Spleen (tissue), 13 donors: ENCODE measurements at regions of chr6 and their contacts with region 1.

Region 1: DNA sequence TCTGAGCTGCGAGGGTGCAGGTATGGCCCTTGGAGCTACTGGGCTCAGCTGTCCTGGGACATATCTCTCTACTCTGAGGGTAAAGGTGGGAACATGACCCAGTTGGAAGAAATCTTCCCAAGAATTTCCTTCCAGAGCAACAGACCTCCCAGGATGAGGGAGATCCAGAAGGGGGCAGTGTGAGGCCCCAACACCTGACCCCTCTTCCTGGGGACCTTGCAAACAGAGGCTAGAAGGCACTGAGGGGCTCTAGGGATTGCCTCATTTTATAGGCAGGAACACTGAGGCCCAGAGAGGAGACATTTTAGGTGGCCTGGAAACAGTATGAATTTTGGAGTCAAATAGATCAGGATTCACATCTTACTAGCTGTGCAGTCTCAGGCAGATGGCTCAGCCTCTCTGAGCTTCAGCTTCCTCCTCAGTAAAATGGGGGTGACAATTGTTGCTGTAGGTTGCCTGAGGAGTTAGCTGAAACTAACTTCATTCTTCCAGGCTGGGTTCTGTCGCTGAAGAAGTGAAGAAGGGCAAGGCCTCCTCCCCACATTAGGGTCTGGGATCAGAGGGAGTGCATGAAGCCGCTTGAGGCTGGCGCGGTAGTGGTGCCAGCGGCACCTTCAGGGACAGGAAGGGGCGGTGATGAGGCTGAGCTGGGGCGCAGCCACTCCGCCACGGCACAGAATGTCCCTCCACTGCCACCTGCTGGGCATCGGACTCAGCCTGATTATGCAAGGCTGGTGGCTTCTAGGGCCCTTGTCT is 11.4 kb downstream of the KCNK17 start:
- DNase-seq: peak; percentile 96
- H3K4me3 ChIP-seq: peak overlapping the region in 1 of 8 donors; percentile 45
- H3K27ac ChIP-seq: no peak overlapping the region
- H3K4me1 ChIP-seq: peaks cover 0 to 8% (median 2%) of the 10 kb centered on the region in 6 donors
- H3K27me3 ChIP-seq: peaks cover 0 to 11% (median 0%) of the 10 kb centered on the region in 7 donors
- CTCF ChIP-seq: peak; percentile 79 to 95 (median 87)
- POLR2A ChIP-seq: no peak

Region 2: GRCh38 chr6:38871741-38872568 is 430.9 kb before region 1 on chr6:
- intact Hi-C with region 1: loop called (anchors 5 kb)
- DNase-seq: no peak
- H3K4me3 ChIP-seq: no peak overlapping the region
- H3K27ac ChIP-seq: no peak overlapping the region
- H3K4me1 ChIP-seq: peaks cover 0 to 18% (median 5%) of the 10 kb centered on the region in 6 donors
- H3K27me3 ChIP-seq: peaks cover 0 to 3% (median 0%) of the 10 kb centered on the region in 7 donors
- CTCF ChIP-seq: peak; percentile 57 to 90 (median 78)
- POLR2A ChIP-seq: no peak

Region 3: DNA sequence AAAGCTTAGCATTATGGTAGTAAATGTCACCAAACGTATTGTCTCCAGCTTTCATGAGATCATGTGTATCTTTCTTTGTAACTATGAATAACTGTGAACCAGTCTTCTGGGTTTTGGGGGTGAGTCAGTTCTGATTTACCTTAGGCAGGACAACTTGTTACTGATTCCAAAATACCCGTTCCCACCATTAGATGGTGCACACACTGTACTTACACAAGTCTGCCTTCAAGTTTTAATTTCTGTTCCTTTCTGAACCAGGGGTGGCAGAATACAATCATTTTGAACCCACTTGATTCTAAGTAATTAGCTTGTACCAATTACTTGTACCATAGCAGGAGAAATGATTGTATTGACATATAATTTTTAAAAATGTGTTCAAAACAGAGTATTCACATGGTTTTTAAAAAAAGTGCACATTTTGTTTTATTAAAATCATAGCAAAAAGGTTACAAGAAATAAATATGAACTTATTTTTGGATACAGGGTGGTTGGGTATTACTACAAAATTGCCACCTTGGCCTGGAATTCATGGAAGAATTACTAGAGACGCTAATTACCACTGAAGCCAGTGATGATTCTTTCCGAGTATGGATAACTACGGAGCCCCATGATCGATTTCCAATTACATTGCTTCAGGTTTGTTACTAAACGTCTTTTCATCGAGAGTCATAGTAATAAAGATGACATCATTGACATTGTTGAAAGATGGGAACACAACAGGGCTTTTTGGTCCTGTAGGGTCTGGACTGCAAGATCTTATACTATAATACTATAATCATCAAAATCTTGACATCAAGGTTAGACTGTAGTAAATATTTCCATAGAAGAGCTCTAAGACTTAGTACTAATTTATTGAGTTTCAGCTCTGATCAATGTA is 329.4 kb before region 1 on chr6:
- intact Hi-C with region 1: loop called (anchors 10 kb)
- DNase-seq: no peak
- H3K4me3 ChIP-seq: no peak overlapping the region
- H3K27ac ChIP-seq: no peak overlapping the region
- H3K4me1 ChIP-seq: no peaks in the 10 kb centered on the region
- H3K27me3 ChIP-seq: peaks cover 0 to 25% (median 0%) of the 10 kb centered on the region in 7 donors
- CTCF ChIP-seq: peak in 8 of 11 experiments; percentile 21 to 52 (median 36)
- POLR2A ChIP-seq: no peak

Region 4: GRCh38 chr6:39166189-39166911 is 136.5 kb before region 1 on chr6:
- intact Hi-C with region 1: loop called (anchors 2 kb)
- DNase-seq: peak; percentile 96
- H3K4me3 ChIP-seq: no peak overlapping the region
- H3K27ac ChIP-seq: no peak overlapping the region
- H3K4me1 ChIP-seq: peaks cover 0 to 13% (median 5%) of the 10 kb centered on the region in 6 donors
- H3K27me3 ChIP-seq: peaks cover 0 to 19% (median 0%) of the 10 kb centered on the region in 7 donors
- CTCF ChIP-seq: peak; percentile 74 to 96 (median 89)
- POLR2A ChIP-seq: no peak